Activated T-helper 2 cell treated with anti-CD3 and anti-CD28 coated beads, Interferon-gamma antibody, Interleukin-2, Interleukin-4, amounts not matched to agents 10 μg/mL and 5 μg/mL and 100 μg/mL, durations not matched to agents 14 hours and 24 hours and 36 hours (primary cell): ENCODE measurements at regions of chr7 and their contacts with region 1.

Region 1: GRCh38 chr7:114269714-114270113 is 144.9 kb upstream of the FOXP2 start:
- DNase-seq: no peak
- H3K4me3 Mint-ChIP-seq: no peak overlapping the region
- H3K27ac Mint-ChIP-seq: no peak overlapping the region
- H3K4me1 Mint-ChIP-seq: no peaks in the 10 kb centered on the region
- H3K27me3 Mint-ChIP-seq: no peaks in the 10 kb centered on the region

Region 2: DNA sequence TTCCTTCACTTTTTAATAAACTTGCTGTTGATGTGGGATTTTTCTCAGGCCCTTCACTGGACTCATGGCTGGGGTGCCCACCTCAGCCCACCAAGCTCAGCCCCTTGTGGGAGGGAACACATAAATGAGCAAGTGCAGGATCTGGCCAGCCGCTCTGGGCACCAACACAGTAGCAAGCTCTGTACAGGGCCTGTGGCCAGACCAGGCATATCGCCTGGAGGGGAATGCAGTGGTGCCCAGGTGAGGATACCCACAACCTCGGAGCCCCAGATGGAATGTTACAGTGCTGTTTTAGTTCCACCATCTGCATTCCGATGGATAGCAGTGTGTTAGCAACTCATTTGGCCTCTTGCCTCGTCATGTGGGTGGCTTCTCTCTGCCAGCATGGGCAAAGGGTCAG is 585.5 kb before region 1 on chr7:
- intact Hi-C with region 1: no loop called
- DNase-seq: no peak
- H3K4me3 Mint-ChIP-seq: no peak overlapping the region
- H3K27ac Mint-ChIP-seq: no peak overlapping the region
- H3K4me1 Mint-ChIP-seq: no peaks in the 10 kb centered on the region
- H3K27me3 Mint-ChIP-seq: no peaks in the 10 kb centered on the region

Region 3: GRCh38 chr7:114048386-114049240 is 221.1 kb before region 1 on chr7:
- intact Hi-C with region 1: loop called (anchors 5 kb)
- DNase-seq: no peak
- H3K4me3 Mint-ChIP-seq: peak overlapping the region; percentile 43
- H3K27ac Mint-ChIP-seq: peak overlapping the region; percentile 57
- H3K4me1 Mint-ChIP-seq: peaks cover 7% of the 10 kb centered on the region
- H3K27me3 Mint-ChIP-seq: no peaks in the 10 kb centered on the region

Region 4: DNA sequence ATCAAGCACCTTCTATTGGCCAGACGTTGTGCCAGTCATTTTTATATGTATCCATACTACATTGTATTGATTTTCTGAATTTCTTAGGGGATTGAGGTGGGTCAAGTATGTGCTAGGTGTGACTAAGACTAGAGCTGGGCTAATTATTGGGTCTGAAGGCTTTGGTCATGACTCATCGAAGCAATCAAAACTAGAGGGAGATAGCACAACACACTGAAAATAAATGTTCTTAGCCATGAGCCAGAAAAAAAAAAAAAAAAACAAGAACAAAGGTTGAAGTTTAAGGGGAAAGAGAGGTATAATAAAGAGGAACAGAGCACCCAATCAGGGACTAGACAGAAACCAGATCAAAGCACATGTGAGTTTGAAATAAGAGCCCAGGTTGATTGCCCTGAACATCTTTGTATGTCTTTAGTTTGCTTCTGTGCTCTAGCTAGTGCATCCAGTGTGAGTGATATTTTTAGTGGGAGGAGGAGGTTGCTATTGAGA is 26.7 kb before region 1 on chr7:
- intact Hi-C with region 1: no loop called
- DNase-seq: no peak
- H3K4me3 Mint-ChIP-seq: no peak overlapping the region
- H3K27ac Mint-ChIP-seq: no peak overlapping the region
- H3K4me1 Mint-ChIP-seq: no peaks in the 10 kb centered on the region
- H3K27me3 Mint-ChIP-seq: no peaks in the 10 kb centered on the region

Region 5: DNA sequence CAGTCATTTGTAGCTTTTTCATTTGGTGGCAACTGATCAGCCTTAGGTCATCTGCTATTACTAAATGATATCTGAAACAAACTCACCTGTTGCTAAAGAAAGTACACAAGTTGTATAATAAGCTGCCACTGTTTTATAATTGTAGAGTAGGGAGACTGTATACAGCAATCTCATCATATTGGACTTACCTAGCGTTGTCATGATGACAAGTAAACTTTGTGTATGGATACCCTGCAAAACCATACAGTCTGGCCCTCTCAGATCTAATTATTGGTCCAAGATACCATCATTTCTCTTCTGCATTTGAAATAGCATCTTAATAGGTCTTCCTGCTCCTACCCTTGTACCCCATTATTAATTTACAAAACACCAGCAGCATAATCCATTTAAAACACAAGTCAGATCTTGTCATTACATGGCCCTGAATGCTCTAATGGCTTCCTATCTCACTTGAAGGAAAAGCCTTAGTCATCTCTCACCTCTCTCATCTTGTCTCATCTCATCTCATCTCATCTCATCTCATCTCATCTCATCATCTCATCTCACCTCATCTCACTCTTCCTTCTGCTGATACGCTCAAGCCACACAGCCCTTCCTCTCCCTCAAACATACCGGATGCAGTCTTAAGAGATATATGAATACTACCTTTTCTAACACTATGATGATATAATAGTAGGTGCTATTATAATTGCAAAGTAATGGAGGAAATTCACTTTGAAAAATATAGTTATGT is 1192.8 kb after region 1 on chr7:
- intact Hi-C with region 1: loop called (anchors 5 kb)
- DNase-seq: no peak
- H3K4me3 Mint-ChIP-seq: no peak overlapping the region
- H3K27ac Mint-ChIP-seq: no peak overlapping the region
- H3K4me1 Mint-ChIP-seq: no peaks in the 10 kb centered on the region
- H3K27me3 Mint-ChIP-seq: no peaks in the 10 kb centered on the region